ENCODE measurements at regions of chr3 and their contacts with region 1.

Region 1: GRCh38 chr3:197959898-197960693 is at the start of gene LMLN:
- DNase-seq: peak; percentile 96
- H3K4me3 ChIP-seq: peak within 1 kb of the TSS; percentile 72 to 91 (median 78)
- H3K27ac ChIP-seq: peak within 1 kb of the TSS; percentile 85
- H3K4me1 ChIP-seq: peaks cover 21% of the 10 kb centered on the region
- H3K27me3 ChIP-seq: no peaks in the 10 kb centered on the region
- CTCF ChIP-seq: no peak
- total RNA-seq, gene LMLN: 7.3 to 10.5 TPM

Region 2: GRCh38 chr3:197866035-197866434 is 94.1 kb before region 1 on chr3:
- CTCF ChIA-PET with region 1: no interaction called
- dilution Hi-C with region 1: no loop called
- in situ Hi-C with region 1: no loop called
- intact Hi-C with region 1: no loop called
- DNase-seq: no peak
- H3K4me3 ChIP-seq: no peak overlapping the region
- H3K27ac ChIP-seq: no peak overlapping the region
- H3K4me1 ChIP-seq: no peaks in the 10 kb centered on the region
- H3K27me3 ChIP-seq: no peaks in the 10 kb centered on the region
- CTCF ChIP-seq: no peak

Region 3: GRCh38 chr3:197949754-197950660 is 10.1 kb before region 1 on chr3 and contains the start of gene RPL35A:
- CTCF ChIA-PET with region 1: no interaction called
- dilution Hi-C with region 1: no loop called
- in situ Hi-C with region 1: no loop called
- intact Hi-C with region 1: loop called (anchors 1 kb)
- DNase-seq: peak; percentile 93
- H3K4me3 ChIP-seq: peak within 1 kb of the TSS; percentile 58 to 95 (median 74)
- H3K27ac ChIP-seq: peak within 1 kb of the TSS; percentile 95
- H3K4me1 ChIP-seq: peaks cover 14% of the 10 kb centered on the region
- H3K27me3 ChIP-seq: no peaks in the 10 kb centered on the region
- CTCF ChIP-seq: no peak
- total RNA-seq, gene RPL35A: 318 to 928 TPM

Region 4: DNA sequence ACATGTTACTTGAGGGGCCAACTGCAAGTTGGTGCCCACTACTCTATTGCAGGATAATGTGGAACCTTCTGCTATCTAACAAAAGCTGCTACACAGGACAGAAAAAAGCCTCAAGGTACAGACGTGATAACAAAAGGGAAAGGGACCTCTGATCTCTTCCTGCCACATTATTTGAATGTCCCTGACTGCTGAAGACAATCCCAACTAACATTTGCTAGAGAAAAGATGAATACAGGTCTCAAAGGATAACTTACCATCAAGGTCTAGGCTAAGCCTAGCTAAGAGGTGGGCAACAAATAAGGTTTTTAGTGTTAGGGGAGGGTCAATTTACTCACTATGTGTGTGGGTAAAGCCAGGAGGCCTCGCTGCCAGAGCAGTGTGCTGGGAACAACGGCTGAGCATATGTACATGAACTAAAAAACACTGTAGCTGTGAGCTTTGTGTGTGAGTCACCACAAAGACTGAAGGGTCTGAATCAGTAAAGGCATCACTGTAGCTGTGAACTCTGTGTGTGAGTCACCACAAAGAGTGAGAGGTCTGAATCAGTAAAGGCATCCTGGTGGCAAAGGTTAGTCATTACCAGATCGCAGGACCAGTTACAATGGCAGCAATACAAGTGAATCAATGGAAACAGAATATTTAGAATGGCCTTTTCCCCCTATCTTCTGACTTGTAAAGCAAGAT is 111.6 kb after region 1 on chr3:
- CTCF ChIA-PET with region 1: no interaction called
- dilution Hi-C with region 1: no loop called
- in situ Hi-C with region 1: no loop called
- intact Hi-C with region 1: loop called (anchors 2 kb)
- DNase-seq: peak; percentile 92
- H3K4me3 ChIP-seq: no peak overlapping the region
- H3K27ac ChIP-seq: peak overlapping the region; percentile 30
- H3K4me1 ChIP-seq: peaks cover 8% of the 10 kb centered on the region
- H3K27me3 ChIP-seq: peaks cover 7% of the 10 kb centered on the region
- CTCF ChIP-seq: peak; percentile 56 to 58

Measured in mammary epithelial cell (primary cell).